Activated T-helper 1 cell treated with anti-CD3 and anti-CD28 coated beads, Interleukin-12 subunit alpha, Interleukin-12 subunit beta, Interleukin-2, Interleukin-4 antibody, amounts not matched to agents 30 ng/mL and 10 ng/mL and 1 ng/mL, durations not matched to agents 14 hours and 24 hours and 36 hours (primary cell): ENCODE measurements at regions of chr9 and their contacts with region 1.

Region 1: GRCh38 chr9:71768388-71769174 is at the start of gene CEMIP2:
- DNase-seq: peak; percentile 84
- H3K4me3 Mint-ChIP-seq: peak within 1 kb of the TSS; percentile 96
- H3K27ac Mint-ChIP-seq: peak within 1 kb of the TSS; percentile 92
- H3K4me1 Mint-ChIP-seq: peaks cover 48% of the 10 kb centered on the region
- H3K27me3 Mint-ChIP-seq: no peaks in the 10 kb centered on the region
- total RNA-seq, gene CEMIP2: 70.0 and 79.1 TPM in 2 replicates

Region 2: GRCh38 chr9:71604197-71605063 is 164.2 kb before region 1 on chr9:
- intact Hi-C with region 1: loop called (anchors 1 kb)
- DNase-seq: peak; percentile 65
- H3K4me3 Mint-ChIP-seq: no peak overlapping the region
- H3K27ac Mint-ChIP-seq: no peak overlapping the region
- H3K4me1 Mint-ChIP-seq: no peaks in the 10 kb centered on the region
- H3K27me3 Mint-ChIP-seq: peaks cover 9% of the 10 kb centered on the region

Region 3: GRCh38 chr9:71703172-71703872 is 65.3 kb before region 1 on chr9:
- intact Hi-C with region 1: loop called (anchors 5 kb)
- DNase-seq: no peak
- H3K4me3 Mint-ChIP-seq: no peak overlapping the region
- H3K27ac Mint-ChIP-seq: peak overlapping the region; percentile 3
- H3K4me1 Mint-ChIP-seq: peaks cover 39% of the 10 kb centered on the region
- H3K27me3 Mint-ChIP-seq: no peaks in the 10 kb centered on the region

Region 4: GRCh38 chr9:71783120-71783530 is 14.5 kb after region 1 on chr9:
- intact Hi-C with region 1: loop called (anchors 1 kb)
- DNase-seq: peak; percentile 80
- H3K4me3 Mint-ChIP-seq: peak overlapping the region; percentile 63
- H3K27ac Mint-ChIP-seq: peak overlapping the region; percentile 93
- H3K4me1 Mint-ChIP-seq: peaks cover 42% of the 10 kb centered on the region
- H3K27me3 Mint-ChIP-seq: peaks cover 2% of the 10 kb centered on the region

Region 5: GRCh38 chr9:71835596-71835995 is 67.0 kb after region 1 on chr9:
- intact Hi-C with region 1: no loop called
- DNase-seq: no peak
- H3K4me3 Mint-ChIP-seq: no peak overlapping the region
- H3K27ac Mint-ChIP-seq: no peak overlapping the region
- H3K4me1 Mint-ChIP-seq: no peaks in the 10 kb centered on the region
- H3K27me3 Mint-ChIP-seq: peaks cover 30% of the 10 kb centered on the region

Region 6: GRCh38 chr9:71911253-71912074 is 142.9 kb after region 1 on chr9 and contains the start of gene C9orf85:
- intact Hi-C with region 1: loop called (anchors 1 kb)
- DNase-seq: peak; percentile 97
- H3K4me3 Mint-ChIP-seq: peak within 1 kb of the TSS; percentile 99
- H3K27ac Mint-ChIP-seq: peak within 1 kb of the TSS; percentile 96
- H3K4me1 Mint-ChIP-seq: peaks cover 64% of the 10 kb centered on the region
- H3K27me3 Mint-ChIP-seq: no peaks in the 10 kb centered on the region
- total RNA-seq, gene C9orf85: 9.3 and 9.8 TPM in 2 replicates